ENCODE measurements at regions of chr3 and their contacts with region 1.

Region 1: DNA sequence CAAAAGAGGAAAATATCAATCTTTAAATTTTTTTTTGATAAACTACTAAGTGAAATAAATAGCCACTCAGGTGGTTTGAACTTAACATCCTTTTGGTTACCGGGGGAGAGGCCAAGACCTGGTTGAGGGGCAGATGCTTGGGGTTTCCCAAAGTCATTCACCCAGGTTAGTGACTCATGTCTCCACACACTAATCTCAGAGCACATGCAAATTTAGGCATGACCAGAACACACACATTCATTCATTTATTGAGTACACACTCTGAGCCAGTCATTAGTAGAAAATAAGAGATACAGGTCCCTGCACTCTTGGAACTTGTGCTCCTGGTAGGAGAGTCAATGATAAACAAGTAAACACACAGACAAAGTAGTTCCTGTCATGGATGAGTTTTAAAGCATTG is 7.3 kb downstream of the ILDR1 start:
- DNase-seq: no peak
- H3K4me3 Mint-ChIP-seq: no peak overlapping the region
- H3K27ac Mint-ChIP-seq: peak overlapping the region; percentile 21
- H3K4me1 Mint-ChIP-seq: peaks cover 40% of the 10 kb centered on the region
- H3K27me3 Mint-ChIP-seq: peaks cover 12% of the 10 kb centered on the region

Region 2: DNA sequence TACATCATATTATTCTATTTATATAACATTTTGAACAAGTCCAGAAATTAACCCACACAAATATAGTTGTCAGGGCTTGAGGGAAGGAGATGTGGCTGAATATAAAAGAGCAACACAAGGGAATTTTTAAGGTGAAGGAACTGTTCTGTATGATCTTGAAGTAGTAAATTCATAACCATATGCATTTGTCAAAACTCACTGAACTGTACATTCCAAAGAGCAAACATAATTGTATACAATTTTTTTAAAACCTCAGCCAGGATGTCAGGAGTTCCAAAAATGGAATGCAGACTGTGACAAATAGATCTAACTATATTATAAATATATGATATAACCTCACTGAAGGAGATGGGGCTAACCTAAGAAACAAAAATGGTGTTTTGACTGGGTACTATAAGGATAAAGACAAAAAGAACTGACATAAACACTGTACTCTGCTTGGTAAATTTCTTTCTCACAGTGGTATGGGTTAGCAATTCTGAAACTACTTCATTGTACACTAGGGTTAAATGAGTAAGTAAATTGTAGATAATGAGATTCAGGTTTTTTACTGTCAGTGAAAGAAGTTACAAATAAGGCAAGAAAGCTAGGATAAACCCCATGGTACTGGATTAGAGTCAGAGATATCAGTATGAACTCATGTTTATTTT is 279.6 kb before region 1 on chr3:
- intact Hi-C with region 1: loop called (anchors 10 kb)
- DNase-seq: no peak
- H3K4me3 Mint-ChIP-seq: no peak overlapping the region
- H3K27ac Mint-ChIP-seq: peak overlapping the region; percentile 36
- H3K4me1 Mint-ChIP-seq: peaks cover 41% of the 10 kb centered on the region
- H3K27me3 Mint-ChIP-seq: no peaks in the 10 kb centered on the region

Region 3: GRCh38 chr3:121942116-121942788 is 72.5 kb before region 1 on chr3:
- intact Hi-C with region 1: no loop called
- DNase-seq: no peak
- H3K4me3 Mint-ChIP-seq: no peak overlapping the region
- H3K27ac Mint-ChIP-seq: no peak overlapping the region
- H3K4me1 Mint-ChIP-seq: no peaks in the 10 kb centered on the region
- H3K27me3 Mint-ChIP-seq: no peaks in the 10 kb centered on the region

Region 4: DNA sequence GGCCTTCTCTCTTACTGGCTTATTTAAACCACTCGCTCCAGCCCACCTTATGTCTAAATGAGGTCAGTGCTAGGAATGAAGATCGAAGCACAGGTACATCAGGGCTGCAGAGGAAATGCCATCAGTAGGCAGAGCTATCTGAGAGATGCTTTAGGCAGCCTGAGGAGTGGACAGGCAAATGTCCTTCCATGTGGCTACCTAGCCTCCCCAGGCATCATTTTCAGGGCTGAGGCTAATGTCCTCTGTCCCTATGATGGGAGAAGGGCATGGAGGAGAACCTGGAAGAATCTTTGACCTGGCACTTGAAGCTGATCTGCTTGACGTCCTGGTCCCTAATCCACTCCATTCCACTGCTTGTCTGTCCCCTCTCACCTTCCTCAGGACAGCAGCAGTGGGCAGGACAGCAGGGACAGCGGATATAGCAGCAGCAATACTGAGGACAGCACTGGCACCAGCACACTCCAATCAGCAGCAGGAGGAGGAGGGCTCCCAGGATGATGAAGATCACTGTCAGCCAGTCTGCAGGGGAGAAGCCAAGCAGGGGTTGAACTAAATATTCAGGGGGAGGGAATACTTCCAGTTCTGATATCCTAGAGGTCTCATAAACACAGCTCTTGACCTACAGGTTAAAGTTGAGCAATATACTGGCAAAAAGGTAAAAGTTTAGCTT is 13.7 kb before region 1 on chr3:
- intact Hi-C with region 1: loop called (anchors 2 kb)
- DNase-seq: no peak
- H3K4me3 Mint-ChIP-seq: no peak overlapping the region
- H3K27ac Mint-ChIP-seq: no peak overlapping the region
- H3K4me1 Mint-ChIP-seq: peaks cover 55% of the 10 kb centered on the region
- H3K27me3 Mint-ChIP-seq: peaks cover 3% of the 10 kb centered on the region

Region 5: GRCh38 chr3:122030381-122031122 is 15.8 kb after region 1 on chr3:
- intact Hi-C with region 1: loop called (anchors 1 kb)
- DNase-seq: peak; percentile 27
- H3K4me3 Mint-ChIP-seq: peak overlapping the region; percentile 20
- H3K27ac Mint-ChIP-seq: peak overlapping the region; percentile 85
- H3K4me1 Mint-ChIP-seq: peaks cover 17% of the 10 kb centered on the region
- H3K27me3 Mint-ChIP-seq: peaks cover 5% of the 10 kb centered on the region

Region 6: DNA sequence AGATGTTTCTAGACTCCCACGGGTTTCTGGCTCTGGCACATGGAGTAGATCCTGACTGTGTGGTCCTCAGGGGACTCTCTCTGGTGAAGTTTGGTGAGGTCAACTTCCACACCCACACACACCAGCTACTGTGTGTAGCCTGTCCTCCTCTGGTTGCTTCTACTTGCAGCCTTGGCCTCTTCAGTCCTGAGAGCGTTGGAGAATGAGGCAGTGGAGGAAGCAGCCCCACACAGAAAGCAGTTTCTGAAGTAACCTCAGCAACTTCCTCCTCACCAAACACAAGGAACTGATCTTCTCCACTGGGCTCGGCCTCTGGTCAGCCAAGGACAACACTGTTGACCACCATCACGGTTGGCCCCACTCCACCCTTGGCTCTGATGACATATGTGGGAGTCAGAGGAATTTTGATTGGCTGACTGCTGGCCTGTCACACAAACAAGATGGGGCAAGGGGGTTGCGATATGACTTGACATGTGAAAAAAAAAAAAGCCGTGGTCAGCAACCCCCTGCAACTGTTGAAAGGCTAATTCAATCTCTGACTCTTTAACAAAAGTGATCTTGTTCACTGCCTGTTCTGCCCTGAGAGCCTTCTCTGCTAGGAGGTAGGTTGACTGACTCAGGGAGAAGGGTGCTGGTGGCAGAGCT is 60.0 kb after region 1 on chr3:
- intact Hi-C with region 1: loop called (anchors 2 kb)
- DNase-seq: peak; percentile 43
- H3K4me3 Mint-ChIP-seq: peak overlapping the region; percentile 71
- H3K27ac Mint-ChIP-seq: peak overlapping the region; percentile 87
- H3K4me1 Mint-ChIP-seq: peaks cover 62% of the 10 kb centered on the region
- H3K27me3 Mint-ChIP-seq: no peaks in the 10 kb centered on the region

Region 7: GRCh38 chr3:122085673-122086072 is 70.9 kb after region 1 on chr3:
- intact Hi-C with region 1: loop called (anchors 2 kb)
- DNase-seq: no peak
- H3K4me3 Mint-ChIP-seq: no peak overlapping the region
- H3K27ac Mint-ChIP-seq: peak overlapping the region; percentile 37
- H3K4me1 Mint-ChIP-seq: peaks cover 55% of the 10 kb centered on the region
- H3K27me3 Mint-ChIP-seq: no peaks in the 10 kb centered on the region

Region 8: DNA sequence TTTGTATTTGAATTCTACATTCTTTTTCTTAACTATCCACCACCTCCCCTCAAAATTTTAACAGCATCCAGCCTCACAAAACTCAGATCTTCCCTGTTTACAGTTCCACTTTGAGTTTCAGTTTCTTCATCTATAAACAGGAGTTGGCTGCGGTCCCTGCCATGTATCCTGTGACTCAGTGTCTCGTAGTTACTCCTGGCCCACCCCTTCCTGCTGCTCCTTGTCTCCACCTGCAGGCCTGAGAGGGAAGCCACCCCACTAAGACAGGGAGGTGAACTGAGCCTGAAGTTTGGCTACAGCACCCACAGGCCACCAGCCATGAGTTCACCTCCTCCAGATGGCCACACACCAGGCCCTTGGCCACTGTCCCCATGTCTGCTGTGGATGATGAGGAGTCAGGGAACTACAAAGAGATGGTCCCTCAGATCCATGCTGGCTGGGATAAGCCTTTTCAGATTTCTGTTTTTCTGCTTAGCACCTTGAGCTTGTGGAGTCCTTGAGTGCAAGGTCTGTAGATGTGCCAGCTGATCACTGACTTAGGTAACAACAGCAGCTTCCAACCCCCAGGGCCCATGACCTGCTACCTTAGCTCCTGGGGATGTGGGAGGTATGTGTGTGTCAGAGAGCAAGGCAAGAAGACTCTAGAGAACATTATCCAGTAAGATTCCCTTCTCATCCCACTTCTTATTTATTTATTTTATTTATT is 77.9 kb after region 1 on chr3:
- intact Hi-C with region 1: loop called (anchors 1 kb)
- DNase-seq: peak; percentile 55
- H3K4me3 Mint-ChIP-seq: peak overlapping the region; percentile 32
- H3K27ac Mint-ChIP-seq: peak overlapping the region; percentile 90
- H3K4me1 Mint-ChIP-seq: peaks cover 40% of the 10 kb centered on the region
- H3K27me3 Mint-ChIP-seq: no peaks in the 10 kb centered on the region

Measured in activated T-helper 1 cell treated with anti-CD3 and anti-CD28 coated beads, Interleukin-12 subunit alpha, Interleukin-12 subunit beta, Interleukin-2, Interleukin-4 antibody, amounts not matched to agents 30 ng/mL and 10 ng/mL and 1 ng/mL, durations not matched to agents 14 hours and 24 hours and 36 hours (primary cell).